Activated CD4-positive, alpha-beta memory T cell treated with anti-CD3 and anti-CD28 coated beads for 36 hours (primary cell): ENCODE measurements at regions of chr5 and their contacts with region 1.

Region 1: DNA sequence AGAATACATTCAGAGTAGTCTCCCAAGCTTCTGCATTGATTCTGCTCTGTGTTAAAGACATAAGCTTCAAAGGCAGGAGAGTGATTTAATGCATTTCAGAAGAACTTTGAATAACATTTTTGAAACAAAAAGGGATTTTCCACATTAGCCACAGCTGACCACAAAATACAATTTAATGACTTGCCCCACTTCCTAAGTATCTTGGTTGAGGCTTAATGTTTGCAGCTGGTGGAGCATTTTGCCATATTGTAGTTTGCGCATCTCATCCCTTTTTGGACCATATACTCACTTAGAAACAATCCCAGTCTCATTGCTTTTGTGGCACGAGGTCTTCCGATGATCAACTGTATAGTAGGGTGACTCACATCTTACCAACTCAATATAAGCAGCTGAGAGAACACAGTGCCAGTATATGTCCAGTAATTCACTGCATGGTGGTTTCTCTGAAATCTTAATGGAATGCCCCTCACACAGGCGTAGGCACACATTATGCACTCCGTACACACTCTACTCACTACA is 455.8 kb upstream of the PTGER4 start:
- DNase-seq: peak; percentile 67
- H3K4me3 Mint-ChIP-seq: peak overlapping the region; percentile 59
- H3K27ac Mint-ChIP-seq: peak overlapping the region; percentile 95
- H3K4me1 Mint-ChIP-seq: peaks cover 66% of the 10 kb centered on the region
- H3K27me3 Mint-ChIP-seq: no peaks in the 10 kb centered on the region

Region 2: GRCh38 chr5:40171971-40172370 is 52.0 kb before region 1 on chr5:
- CTCF ChIA-PET with region 1: no interaction called
- POLR2A ChIA-PET with region 1: interaction called, 3 read pairs
- intact Hi-C with region 1: loop called (anchors 1 kb)
- DNase-seq: no peak
- H3K4me3 Mint-ChIP-seq: no peak overlapping the region
- H3K27ac Mint-ChIP-seq: no peak overlapping the region
- H3K4me1 Mint-ChIP-seq: peaks cover 16% of the 10 kb centered on the region
- H3K27me3 Mint-ChIP-seq: no peaks in the 10 kb centered on the region

Region 3: DNA sequence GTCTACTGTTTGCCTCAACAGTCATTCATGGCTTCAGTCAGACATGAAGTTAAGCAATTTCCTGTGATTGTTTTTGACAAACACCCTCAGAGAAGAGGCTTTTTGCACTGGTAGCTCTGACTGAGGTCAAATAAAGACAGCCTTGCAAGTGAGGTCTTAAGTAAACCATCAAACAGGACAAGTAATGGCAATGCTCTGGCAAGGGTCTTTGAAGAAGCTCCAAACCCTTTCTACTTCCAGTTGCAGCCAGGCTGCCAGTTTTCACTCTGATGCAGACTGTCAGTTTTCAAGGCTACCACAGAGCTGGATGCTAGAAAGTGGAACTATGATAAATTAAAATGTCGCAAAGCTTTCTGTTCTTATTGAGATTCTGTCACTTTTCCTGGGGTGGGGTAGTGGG is 34.3 kb after region 1 on chr5:
- CTCF ChIA-PET with region 1: no interaction called
- POLR2A ChIA-PET with region 1: no interaction called
- intact Hi-C with region 1: loop called (anchors 1 kb)
- DNase-seq: peak; percentile 24
- H3K4me3 Mint-ChIP-seq: no peak overlapping the region
- H3K27ac Mint-ChIP-seq: peak overlapping the region; percentile 67
- H3K4me1 Mint-ChIP-seq: peaks cover 11% of the 10 kb centered on the region
- H3K27me3 Mint-ChIP-seq: no peaks in the 10 kb centered on the region

Region 4: GRCh38 chr5:40404613-40405012 is 180.7 kb after region 1 on chr5:
- CTCF ChIA-PET with region 1: interaction called, 3 read pairs
- POLR2A ChIA-PET with region 1: interaction called, 5 read pairs
- intact Hi-C with region 1: loop called (anchors 1 kb)
- DNase-seq: no peak
- H3K4me3 Mint-ChIP-seq: no peak overlapping the region
- H3K27ac Mint-ChIP-seq: peak overlapping the region; percentile 99
- H3K4me1 Mint-ChIP-seq: peaks cover 90% of the 10 kb centered on the region
- H3K27me3 Mint-ChIP-seq: no peaks in the 10 kb centered on the region

Region 5: GRCh38 chr5:40578501-40579451 is 354.8 kb after region 1 on chr5:
- CTCF ChIA-PET with region 1: no interaction called
- POLR2A ChIA-PET with region 1: no interaction called
- intact Hi-C with region 1: loop called (anchors 1 kb)
- DNase-seq: peak; percentile 86
- H3K4me3 Mint-ChIP-seq: peak overlapping the region; percentile 48
- H3K27ac Mint-ChIP-seq: peak overlapping the region; percentile 66
- H3K4me1 Mint-ChIP-seq: peaks cover 38% of the 10 kb centered on the region
- H3K27me3 Mint-ChIP-seq: no peaks in the 10 kb centered on the region

Region 6: GRCh38 chr5:40755407-40756365 is 531.7 kb after region 1 on chr5 and contains the start of gene TTC33:
- CTCF ChIA-PET with region 1: no interaction called
- POLR2A ChIA-PET with region 1: no interaction called
- intact Hi-C with region 1: loop called (anchors 5 kb)
- DNase-seq: peak; percentile 98
- H3K4me3 Mint-ChIP-seq: peak within 1 kb of the TSS; percentile 21
- H3K27ac Mint-ChIP-seq: no peak within 1 kb of the TSS
- H3K4me1 Mint-ChIP-seq: peaks cover 17% of the 10 kb centered on the region
- H3K27me3 Mint-ChIP-seq: no peaks in the 10 kb centered on the region
- total RNA-seq, gene TTC33: 30.2 to 34.1 TPM